GM10248 (cell line): ENCODE measurements at regions of chr1 and their contacts with region 1.

Region 1: GRCh38 chr1:92994105-92994712 is 32.9 kb upstream of the DIPK1A start:
- DNase-seq: peak; percentile 65
- CTCF ChIP-seq: peak; percentile 77

Region 2: GRCh38 chr1:92837062-92837461 is 157.1 kb before region 1 on chr1:
- CTCF ChIA-PET with region 1: interaction called, 16 read pairs
- POLR2A ChIA-PET with region 1: no interaction called
- DNase-seq: no peak
- CTCF ChIP-seq: no peak

Region 3: GRCh38 chr1:92872719-92873118 is 121.5 kb before region 1 on chr1:
- CTCF ChIA-PET with region 1: interaction called, 28 read pairs
- POLR2A ChIA-PET with region 1: no interaction called
- DNase-seq: no peak
- CTCF ChIP-seq: no peak

Region 4: GRCh38 chr1:92901699-92902405 is 92.4 kb before region 1 on chr1:
- CTCF ChIA-PET with region 1: interaction called, 12 read pairs
- POLR2A ChIA-PET with region 1: no interaction called
- DNase-seq: no peak
- CTCF ChIP-seq: no peak

Region 5: GRCh38 chr1:92968138-92969032 is 25.8 kb before region 1 on chr1:
- CTCF ChIA-PET with region 1: interaction called, 282 read pairs
- POLR2A ChIA-PET with region 1: no interaction called
- DNase-seq: no peak
- CTCF ChIP-seq: peak; percentile 65

Region 6: GRCh38 chr1:93015590-93015989 is 21.4 kb after region 1 on chr1:
- CTCF ChIA-PET with region 1: interaction called, 84 read pairs
- POLR2A ChIA-PET with region 1: no interaction called
- DNase-seq: no peak
- CTCF ChIP-seq: no peak